IMR-90 (cell line): ENCODE measurements at regions of chr7 and their contacts with region 1.

Region 1: DNA sequence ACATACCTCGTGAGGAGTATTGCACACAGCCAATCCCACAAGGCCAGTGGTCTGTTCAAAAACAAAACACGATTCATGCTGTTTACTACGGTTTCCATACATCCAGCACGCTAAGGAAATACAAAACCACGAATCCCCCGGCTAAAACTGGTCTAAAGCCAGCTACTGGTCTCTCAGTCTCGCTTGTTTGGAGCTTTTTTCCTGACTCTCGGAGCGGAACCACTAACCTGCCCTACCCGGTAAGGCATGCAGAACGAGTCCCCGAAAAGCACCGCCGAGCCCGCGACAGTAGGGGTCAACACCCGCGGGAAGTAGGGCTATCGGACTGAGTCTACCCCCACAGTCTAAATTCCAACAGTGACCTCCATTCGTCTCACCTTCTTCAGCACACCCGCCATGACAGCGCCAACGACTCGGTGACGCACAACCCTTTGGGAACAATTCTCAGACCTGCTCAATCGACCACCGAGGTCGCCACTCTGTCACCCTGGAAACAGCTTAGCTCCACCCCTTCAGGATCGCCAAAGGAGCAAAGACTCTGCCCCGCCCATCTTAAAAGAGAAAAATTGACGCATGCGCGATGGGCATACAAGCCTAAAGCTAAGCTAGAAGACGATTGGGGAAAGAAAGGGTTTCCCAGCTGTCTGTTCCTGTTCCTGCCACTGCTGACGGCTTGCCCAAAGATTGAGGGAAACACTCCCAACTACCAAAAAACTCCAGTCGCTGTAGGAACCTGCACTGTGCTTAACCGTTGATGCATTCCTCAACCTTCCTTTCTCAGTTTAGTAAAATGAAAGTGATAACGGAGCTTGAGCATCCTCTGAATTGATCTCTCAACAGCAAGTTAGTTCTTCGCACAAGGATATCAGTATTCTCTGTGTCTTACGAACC is at the start of gene NDUFA5:
- DNase-seq: peak; percentile 99
- ATAC-seq: peak; percentile 99
- H3K4me3 ChIP-seq: peak within 1 kb of the TSS; percentile 66
- H3K27ac ChIP-seq: peak within 1 kb of the TSS; percentile 72
- H3K4me1 ChIP-seq: no peaks in the 10 kb centered on the region
- H3K27me3 ChIP-seq: no peaks in the 10 kb centered on the region
- CTCF ChIP-seq: no peak
- POLR2A ChIP-seq: peak; percentile 64; the same call in 1 of the 2 replicates
- RAD21 ChIP-seq: no peak
- total RNA-seq, gene NDUFA5: 2.9 and 14.4 TPM in 2 replicates

Region 2: GRCh38 chr7:123534383-123535260 is 23.0 kb before region 1 on chr7 and contains the start of gene IQUB:
- CTCF ChIA-PET with region 1: interaction called, 3 read pairs
- POLR2A ChIA-PET with region 1: no interaction called
- dilution Hi-C with region 1: no loop called
- in situ Hi-C with region 1: no loop called
- intact Hi-C with region 1: loop called (anchors 1 kb)
- DNase-seq: peak; percentile 95
- ATAC-seq: peak; percentile 92
- H3K4me3 ChIP-seq: peak within 1 kb of the TSS; percentile 82
- H3K27ac ChIP-seq: peak within 1 kb of the TSS; percentile 97
- H3K4me1 ChIP-seq: peaks cover 5% of the 10 kb centered on the region; the same call in 1 of the 2 replicates
- H3K27me3 ChIP-seq: no peaks in the 10 kb centered on the region
- CTCF ChIP-seq: no peak
- POLR2A ChIP-seq: peak; percentile 60; the same call in 1 of the 2 replicates
- RAD21 ChIP-seq: no peak
- total RNA-seq, gene IQUB: 0.18 and 0.28 TPM in 2 replicates

Region 3: DNA sequence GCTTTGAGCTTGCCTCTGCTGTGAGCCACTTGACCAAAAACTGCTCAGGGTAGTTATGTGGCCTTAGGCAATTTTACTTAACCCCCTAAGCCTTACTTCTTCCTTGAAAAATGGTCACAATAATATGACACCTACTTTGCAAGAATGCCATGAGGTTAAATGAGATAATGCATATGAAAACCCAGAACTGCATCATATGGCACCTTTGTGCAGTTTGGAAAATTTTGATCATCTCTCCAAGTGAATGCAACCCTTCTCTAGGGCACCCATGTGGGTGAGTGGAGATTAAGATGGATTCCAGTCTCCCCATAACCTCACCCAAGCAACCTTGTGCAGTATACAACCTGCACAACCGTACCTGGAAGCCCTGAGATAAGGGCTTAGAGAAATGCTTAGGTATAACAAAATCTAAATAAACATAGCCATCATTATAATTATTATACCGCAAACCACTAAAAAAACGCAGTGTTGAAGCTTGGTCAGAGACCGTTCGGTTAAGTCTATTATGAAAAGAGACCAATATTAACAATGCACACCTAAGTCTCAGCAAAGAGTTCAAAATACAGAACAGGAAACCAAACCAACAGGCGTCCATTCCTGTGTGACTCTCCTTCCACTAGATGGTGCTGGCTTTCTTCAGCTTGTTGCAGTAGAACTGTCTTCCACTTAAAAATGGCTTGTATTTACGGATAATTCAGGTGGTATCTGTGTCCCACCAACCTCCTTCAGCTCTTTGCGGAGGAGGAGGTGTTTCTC is 22.9 kb after region 1 on chr7:
- CTCF ChIA-PET with region 1: no interaction called
- POLR2A ChIA-PET with region 1: no interaction called
- dilution Hi-C with region 1: no loop called
- in situ Hi-C with region 1: no loop called
- intact Hi-C with region 1: loop called (anchors 2 kb)
- DNase-seq: peak; percentile 42
- ATAC-seq: peak; percentile 92
- H3K4me3 ChIP-seq: no peak overlapping the region
- H3K27ac ChIP-seq: no peak overlapping the region
- H3K4me1 ChIP-seq: no peaks in the 10 kb centered on the region
- H3K27me3 ChIP-seq: no peaks in the 10 kb centered on the region; the same call in none of the 2 replicates
- CTCF ChIP-seq: peak; percentile 60
- POLR2A ChIP-seq: no peak
- RAD21 ChIP-seq: peak; percentile 63